ENCODE measurements at regions of chr16 and their contacts with region 1.

Region 1: GRCh38 chr16:8674413-8675022 is at the start of gene ABAT:
- DNase-seq: peak; percentile 95 to 96 (median 96)
- ATAC-seq: peak; percentile 92 to 99 (median 98)
- H3K4me3 ChIP-seq: peak within 1 kb of the TSS; percentile 77 to 94 (median 83)
- H3K27ac ChIP-seq: peak within 1 kb of the TSS; percentile 38 to 81 (median 49)
- H3K4me1 ChIP-seq: peaks cover 0 to 30% (median 12%) of the 10 kb centered on the region in 4 donors
- H3K27me3 ChIP-seq: no peaks in the 10 kb centered on the region
- CTCF ChIP-seq: no peak
- POLR2A ChIP-seq: peak; percentile 86
- total RNA-seq, gene ABAT: 160 to 378 (median 305) TPM

Region 2: DNA sequence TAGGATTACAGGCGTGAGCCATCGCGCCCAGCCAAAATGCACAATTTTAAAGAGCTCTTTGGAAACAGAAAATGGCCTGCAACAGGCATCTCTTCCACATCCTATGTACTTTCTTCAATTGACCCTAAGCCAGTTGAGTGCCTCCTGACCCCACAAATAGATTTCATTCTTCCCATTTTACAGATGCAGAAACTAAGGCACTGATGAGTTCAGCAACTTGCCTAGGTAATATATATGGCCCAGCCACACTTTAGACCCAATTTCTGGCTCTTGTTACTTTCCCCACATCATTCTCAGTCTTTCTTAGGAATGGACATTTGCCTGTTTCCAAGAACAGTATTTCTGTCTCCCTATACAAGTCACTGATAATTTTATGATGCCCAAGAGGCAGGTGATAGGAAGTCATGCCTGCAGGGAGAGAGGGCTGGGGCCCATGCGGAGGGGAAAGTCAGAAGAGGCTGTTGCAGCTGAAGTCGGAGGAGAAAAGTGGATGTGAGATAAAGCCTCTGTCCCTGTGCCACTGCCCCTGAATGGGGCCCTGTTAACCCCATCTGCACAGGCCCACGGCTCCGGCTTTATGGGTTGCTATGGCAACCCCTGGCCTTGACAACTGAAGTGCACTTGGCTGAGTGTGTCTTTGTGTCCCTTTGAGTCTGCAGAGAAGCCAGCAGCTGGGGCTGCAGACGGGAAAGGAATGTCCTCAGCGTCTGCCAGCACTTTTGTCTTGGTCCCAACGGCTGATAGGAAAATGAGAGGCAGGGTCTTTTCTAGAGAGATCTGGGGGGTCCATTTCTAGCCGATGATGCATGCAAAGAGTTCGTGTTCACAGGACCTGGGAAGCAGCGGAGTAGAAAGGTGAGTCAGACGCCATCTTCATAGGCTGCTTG is 45.8 kb after region 1 on chr16:
- intact Hi-C with region 1: loop called in 1 of 2 experiments (anchors 10 kb)
- DNase-seq: no peak
- ATAC-seq: no peak
- H3K4me3 ChIP-seq: no peak overlapping the region
- H3K27ac ChIP-seq: no peak overlapping the region
- H3K4me1 ChIP-seq: no peaks in the 10 kb centered on the region
- H3K27me3 ChIP-seq: no peaks in the 10 kb centered on the region
- CTCF ChIP-seq: no peak
- POLR2A ChIP-seq: no peak

Measured in right lobe of liver (tissue), 6 donors.